Naive thymus-derived CD4-positive, alpha-beta T cell (primary cell): ENCODE measurements at regions of chr3 and their contacts with region 1.

Region 1: DNA sequence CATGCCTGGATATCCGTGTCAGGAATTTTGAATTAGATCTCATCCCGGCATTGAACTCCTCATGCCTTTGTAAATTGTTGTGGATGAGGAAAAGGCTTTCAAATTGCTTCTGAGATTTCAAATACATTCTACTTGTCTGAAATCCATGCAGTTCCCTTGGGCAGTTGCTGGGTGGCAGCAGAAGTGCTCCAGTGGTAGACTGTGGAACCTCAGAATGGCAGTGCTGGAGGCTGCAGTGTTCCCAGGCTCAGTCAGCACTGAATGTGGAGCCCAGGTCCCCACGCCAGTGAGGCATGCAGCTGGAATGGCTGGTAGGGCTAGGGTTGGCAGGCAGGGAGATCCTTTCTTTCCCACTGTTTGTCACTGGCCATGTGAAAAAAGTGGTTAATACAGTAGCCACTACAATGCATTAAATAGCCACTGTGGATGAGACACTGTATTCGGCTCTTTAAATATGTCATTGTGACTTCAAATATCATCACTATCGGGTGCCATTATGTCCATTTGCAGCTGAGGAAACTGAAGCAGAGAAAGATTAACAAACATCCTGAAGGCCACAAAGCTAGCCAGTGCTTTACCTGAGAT is 98.6 kb downstream of the TPRG1 start:
- DNase-seq: peak in 6 of 9 donors; percentile 18 to 47 (median 32)
- ATAC-seq: peak; percentile 53
- H3K4me3 ChIP-seq: no peak overlapping the region
- H3K4me3 Mint-ChIP-seq: no peak overlapping the region
- H3K27ac ChIP-seq: no peak overlapping the region
- H3K27ac Mint-ChIP-seq: peak overlapping the region in 1 of 9 donors; percentile 27
- H3K4me1 ChIP-seq: peaks cover 0 to 15% of the 10 kb centered on the region in 2 donors
- H3K4me1 Mint-ChIP-seq: peaks cover 5 to 34% (median 20%) of the 10 kb centered on the region in 7 donors
- H3K27me3 ChIP-seq: no peaks in the 10 kb centered on the region
- H3K27me3 Mint-ChIP-seq: no peaks in the 10 kb centered on the region

Region 2: GRCh38 chr3:189233225-189233858 is 37.0 kb before region 1 on chr3:
- CTCF ChIA-PET with region 1: no interaction called
- POLR2A ChIA-PET with region 1: no interaction called
- intact Hi-C with region 1: no loop called
- DNase-seq: no peak
- ATAC-seq: no peak
- H3K4me3 ChIP-seq: no peak overlapping the region
- H3K4me3 Mint-ChIP-seq: no peak overlapping the region
- H3K27ac ChIP-seq: no peak overlapping the region
- H3K27ac Mint-ChIP-seq: no peak overlapping the region
- H3K4me1 ChIP-seq: no peaks in the 10 kb centered on the region
- H3K4me1 Mint-ChIP-seq: peaks cover 0 to 10% (median 4%) of the 10 kb centered on the region in 7 donors
- H3K27me3 ChIP-seq: no peaks in the 10 kb centered on the region
- H3K27me3 Mint-ChIP-seq: peaks cover 0 to 14% (median 0%) of the 10 kb centered on the region in 5 donors

Region 3: DNA sequence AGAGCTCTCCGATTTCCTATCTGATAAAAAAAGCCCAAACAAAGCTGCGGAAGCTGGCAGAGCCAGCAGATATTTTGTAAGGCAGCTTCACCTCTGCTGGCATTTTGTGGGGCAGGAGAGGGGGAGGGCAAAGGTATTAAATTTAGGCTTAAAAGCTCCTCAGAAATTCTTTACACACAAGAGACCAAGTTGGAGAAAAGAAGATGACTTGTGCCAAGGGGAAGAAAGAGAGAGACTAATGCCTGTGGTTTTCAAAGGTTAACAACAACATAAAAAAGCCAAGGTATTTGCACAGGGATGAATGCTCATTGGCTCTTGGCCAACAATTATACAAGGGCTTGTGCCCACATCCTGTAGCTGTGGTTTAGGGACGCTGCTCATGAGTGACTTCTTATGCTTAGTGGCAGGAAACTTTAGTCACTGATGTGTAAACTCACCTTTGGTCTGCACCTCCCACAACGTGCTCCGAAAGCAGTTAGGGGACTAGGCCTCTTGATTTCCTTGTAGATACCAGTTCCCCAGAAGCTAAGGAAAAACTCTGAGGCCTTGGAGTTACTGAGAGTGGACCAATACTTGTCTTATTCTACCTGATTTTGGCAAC is 54.3 kb after region 1 on chr3:
- CTCF ChIA-PET with region 1: interaction called, 8 read pairs
- POLR2A ChIA-PET with region 1: interaction called, 3 read pairs
- intact Hi-C with region 1: loop called (anchors 1 kb)
- DNase-seq: peak; percentile 15 to 96 (median 94)
- ATAC-seq: peak; percentile 98
- H3K4me3 ChIP-seq: peak overlapping the region; percentile 21
- H3K4me3 Mint-ChIP-seq: peak overlapping the region; percentile 72 to 87 (median 82)
- H3K27ac ChIP-seq: peak overlapping the region; percentile 51
- H3K27ac Mint-ChIP-seq: peak overlapping the region; percentile 86 to 100 (median 94)
- H3K4me1 ChIP-seq: peaks cover 33 to 46% of the 10 kb centered on the region in 2 donors
- H3K4me1 Mint-ChIP-seq: peaks cover 27 to 80% (median 73%) of the 10 kb centered on the region in 7 donors
- H3K27me3 ChIP-seq: no peaks in the 10 kb centered on the region
- H3K27me3 Mint-ChIP-seq: peaks cover 0 to 4% (median 0%) of the 10 kb centered on the region in 5 donors

Region 4: DNA sequence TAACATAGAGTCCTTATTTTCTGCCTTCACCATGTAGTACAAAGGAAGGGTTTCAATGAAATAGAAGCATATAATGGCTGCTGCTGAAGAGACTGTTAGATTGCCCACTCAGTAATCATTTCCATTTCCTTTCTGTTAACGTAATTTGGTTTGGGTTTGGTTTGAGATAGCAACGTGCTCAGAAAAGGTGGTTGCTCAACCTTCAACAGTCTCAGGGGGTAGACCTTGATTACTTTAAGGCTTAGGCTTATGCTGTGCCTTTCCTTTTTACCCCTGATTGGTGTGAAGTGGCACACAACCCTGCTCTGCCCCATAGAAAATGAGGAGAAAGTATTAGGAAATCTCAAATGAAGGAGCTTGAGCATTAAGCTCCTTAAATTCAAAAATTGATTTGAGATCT is 197.1 kb after region 1 on chr3:
- CTCF ChIA-PET with region 1: interaction called, 3 read pairs
- POLR2A ChIA-PET with region 1: no interaction called
- intact Hi-C with region 1: loop called in 1 of 2 experiments (anchors 10 kb)
- DNase-seq: no peak
- ATAC-seq: no peak
- H3K4me3 ChIP-seq: no peak overlapping the region
- H3K4me3 Mint-ChIP-seq: no peak overlapping the region
- H3K27ac ChIP-seq: no peak overlapping the region
- H3K27ac Mint-ChIP-seq: no peak overlapping the region
- H3K4me1 ChIP-seq: no peaks in the 10 kb centered on the region
- H3K4me1 Mint-ChIP-seq: peaks cover 0 to 1% (median 0%) of the 10 kb centered on the region in 7 donors
- H3K27me3 ChIP-seq: no peaks in the 10 kb centered on the region
- H3K27me3 Mint-ChIP-seq: no peaks in the 10 kb centered on the region

Region 5: DNA sequence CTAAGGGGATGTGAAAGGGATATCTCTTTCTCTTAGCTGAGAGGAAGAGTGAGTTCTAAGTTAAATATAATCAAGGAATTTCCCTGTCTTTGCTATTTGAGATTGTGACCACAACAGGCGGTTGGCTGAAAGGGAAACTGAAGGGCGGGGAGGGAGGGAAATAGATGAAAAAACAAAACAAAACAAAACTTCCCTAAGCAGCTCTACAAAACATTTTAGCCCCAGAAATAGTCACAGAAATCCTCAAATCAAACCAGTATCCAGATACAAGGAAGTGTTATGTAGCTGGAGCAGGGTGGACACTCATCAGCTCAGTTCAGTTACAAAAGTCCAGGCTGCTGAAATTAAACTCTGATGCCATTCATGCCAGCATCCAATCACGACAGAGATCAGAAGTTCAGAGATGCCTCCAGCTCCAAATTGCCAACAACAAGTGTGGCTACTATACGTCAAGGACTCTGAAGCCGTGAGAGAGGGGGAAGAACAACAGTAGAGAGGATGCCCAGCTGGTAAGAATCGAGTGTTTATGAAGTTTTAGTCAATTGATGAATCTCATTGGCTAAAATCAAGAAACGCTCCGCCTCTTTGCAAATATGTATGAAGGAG is 360.5 kb after region 1 on chr3:
- CTCF ChIA-PET with region 1: interaction called, 3 read pairs
- POLR2A ChIA-PET with region 1: no interaction called
- intact Hi-C with region 1: loop called in 1 of 2 experiments (anchors 5 kb)
- DNase-seq: no peak
- ATAC-seq: peak; percentile 54
- H3K4me3 ChIP-seq: no peak overlapping the region
- H3K4me3 Mint-ChIP-seq: peak overlapping the region in 1 of 10 donors; percentile 68
- H3K27ac ChIP-seq: no peak overlapping the region
- H3K27ac Mint-ChIP-seq: peak overlapping the region in 1 of 9 donors; percentile 82
- H3K4me1 ChIP-seq: peaks cover 0 to 3% of the 10 kb centered on the region in 2 donors
- H3K4me1 Mint-ChIP-seq: peaks cover 4 to 28% (median 24%) of the 10 kb centered on the region in 7 donors
- H3K27me3 ChIP-seq: no peaks in the 10 kb centered on the region
- H3K27me3 Mint-ChIP-seq: no peaks in the 10 kb centered on the region

Region 6: GRCh38 chr3:189806180-189806951 is 536.0 kb after region 1 on chr3:
- CTCF ChIA-PET with region 1: no interaction called
- POLR2A ChIA-PET with region 1: no interaction called
- intact Hi-C with region 1: no loop called
- DNase-seq: no peak
- ATAC-seq: no peak
- H3K4me3 ChIP-seq: no peak overlapping the region
- H3K4me3 Mint-ChIP-seq: no peak overlapping the region
- H3K27ac ChIP-seq: no peak overlapping the region
- H3K27ac Mint-ChIP-seq: no peak overlapping the region
- H3K4me1 ChIP-seq: no peaks in the 10 kb centered on the region
- H3K4me1 Mint-ChIP-seq: no peaks in the 10 kb centered on the region
- H3K27me3 ChIP-seq: no peaks in the 10 kb centered on the region
- H3K27me3 Mint-ChIP-seq: no peaks in the 10 kb centered on the region

Region 7: GRCh38 chr3:189947948-189948723 is 677.8 kb after region 1 on chr3:
- CTCF ChIA-PET with region 1: interaction called, 23 read pairs
- POLR2A ChIA-PET with region 1: interaction called, 3 read pairs
- intact Hi-C with region 1: loop called (anchors 1 kb)
- DNase-seq: peak in 5 of 9 donors; percentile 17 to 43 (median 30)
- ATAC-seq: no peak
- H3K4me3 ChIP-seq: no peak overlapping the region
- H3K4me3 Mint-ChIP-seq: peak overlapping the region in 1 of 10 donors; percentile 34
- H3K27ac ChIP-seq: no peak overlapping the region
- H3K27ac Mint-ChIP-seq: peak overlapping the region in 2 of 9 donors; percentile 0 to 12
- H3K4me1 ChIP-seq: no peaks in the 10 kb centered on the region
- H3K4me1 Mint-ChIP-seq: peaks cover 0 to 12% (median 4%) of the 10 kb centered on the region in 7 donors
- H3K27me3 ChIP-seq: no peaks in the 10 kb centered on the region
- H3K27me3 Mint-ChIP-seq: peaks cover 0 to 13% (median 6%) of the 10 kb centered on the region in 5 donors

Region 8: DNA sequence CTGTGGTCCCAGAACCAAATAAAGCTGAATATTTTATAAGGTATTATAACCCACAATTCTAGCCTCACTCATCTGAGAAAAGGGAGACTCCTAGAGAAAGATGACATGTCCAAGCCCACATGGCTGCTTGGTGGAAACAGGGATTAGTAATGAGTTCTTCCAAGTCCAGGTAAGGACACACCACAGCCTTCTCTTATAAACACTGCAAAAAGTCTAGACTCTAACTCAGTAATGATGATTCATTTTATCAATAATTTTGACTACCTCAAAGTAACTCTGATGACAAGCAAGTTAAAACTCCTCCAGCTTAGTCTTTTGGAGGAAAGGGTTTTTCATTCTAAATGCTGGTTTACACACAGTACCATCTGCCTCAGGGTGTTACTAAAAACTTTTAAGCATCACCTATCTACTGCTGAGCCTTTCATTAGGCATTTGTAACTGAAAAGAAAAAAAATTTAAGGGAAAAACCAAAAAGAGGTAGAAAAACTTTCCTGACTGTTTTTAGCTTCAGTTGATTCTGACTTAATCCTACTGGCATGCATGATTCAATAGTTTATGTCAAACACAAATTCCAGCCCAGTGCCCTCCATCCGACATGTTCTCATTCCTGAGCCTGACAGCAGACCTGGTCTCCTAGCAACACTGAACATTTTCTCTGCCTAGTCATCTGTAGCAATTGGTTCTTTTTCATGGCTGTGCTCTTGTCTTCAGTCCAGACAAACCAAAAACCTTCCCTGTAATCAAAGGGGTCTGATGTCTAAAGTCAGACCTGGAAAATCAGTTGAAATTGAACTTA is 806.5 kb after region 1 on chr3:
- CTCF ChIA-PET with region 1: no interaction called
- POLR2A ChIA-PET with region 1: no interaction called
- intact Hi-C with region 1: no loop called
- DNase-seq: no peak
- ATAC-seq: no peak
- H3K4me3 ChIP-seq: no peak overlapping the region
- H3K4me3 Mint-ChIP-seq: no peak overlapping the region
- H3K27ac ChIP-seq: no peak overlapping the region
- H3K27ac Mint-ChIP-seq: no peak overlapping the region
- H3K4me1 ChIP-seq: no peaks in the 10 kb centered on the region
- H3K4me1 Mint-ChIP-seq: no peaks in the 10 kb centered on the region
- H3K27me3 ChIP-seq: no peaks in the 10 kb centered on the region
- H3K27me3 Mint-ChIP-seq: peaks cover 11 to 29% (median 13%) of the 10 kb centered on the region in 5 donors